ENCODE measurements at regions of chr12 and their contacts with region 1.

Region 1: DNA sequence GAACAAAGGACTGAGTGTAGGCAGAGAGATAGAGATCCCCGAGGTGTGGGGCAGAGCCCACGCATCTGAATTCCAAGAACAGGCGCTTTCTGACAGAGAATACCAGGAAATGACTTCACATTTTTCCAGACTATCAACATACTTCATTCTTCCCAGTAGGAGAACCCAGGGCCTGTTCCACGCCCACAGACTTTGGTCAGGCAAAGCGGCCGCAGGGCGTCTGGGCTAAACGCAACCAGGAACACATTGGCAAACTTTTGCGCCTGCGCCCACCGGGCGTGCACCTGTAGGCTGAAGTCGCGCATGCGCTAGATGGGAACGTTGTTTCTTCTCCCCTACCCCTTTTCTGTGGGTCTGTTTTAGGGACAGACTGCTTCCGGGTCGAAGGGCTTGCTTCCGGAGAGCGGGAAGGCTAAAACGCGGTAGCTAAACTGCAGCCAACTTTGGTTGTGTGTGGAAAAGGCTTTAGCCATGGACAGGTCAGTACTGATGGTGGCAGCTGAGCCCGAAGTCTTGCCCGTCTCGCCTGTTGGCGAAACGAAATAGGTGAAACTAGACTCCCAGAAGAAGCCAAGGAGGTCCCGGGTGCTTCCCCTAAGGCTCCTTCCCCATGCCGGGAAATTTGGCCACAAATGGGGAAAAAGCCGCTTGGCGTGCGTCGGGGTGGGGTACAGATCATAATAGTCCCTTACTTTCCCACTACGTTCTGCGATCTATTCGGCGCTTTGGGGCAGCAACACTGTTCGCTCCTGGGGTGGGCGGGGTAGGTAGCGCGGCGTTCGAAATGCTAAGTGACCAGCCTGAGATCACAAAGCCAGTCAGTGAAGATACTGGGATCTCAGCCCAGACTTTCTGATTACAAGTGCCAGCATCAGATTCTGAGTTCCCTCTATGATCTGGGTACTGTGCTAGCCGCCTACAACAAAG is at the start of gene NUP107:
- DNase-seq: peak; percentile 95
- ATAC-seq: peak; percentile 97
- H3K4me3 ChIP-seq: peak within 1 kb of the TSS; percentile 91
- H3K27ac ChIP-seq: peak within 1 kb of the TSS; percentile 83
- H3K4me1 ChIP-seq: peaks cover 9% of the 10 kb centered on the region
- H3K27me3 ChIP-seq: no peaks in the 10 kb centered on the region
- CTCF ChIP-seq: no peak
- EP300 ChIP-seq: no peak
- POLR2A ChIP-seq: peak; percentile 94
- RAD21 ChIP-seq: 0 out of 2 replicates have a peak, but pooled peaks have one; percentile 10
- polyA plus RNA-seq, gene NUP107: 79.4 to 85.2 TPM

Region 2: GRCh38 chr12:68331869-68332727 is 354.8 kb before region 1 on chr12 and contains the start of gene MDM1:
- CTCF ChIA-PET with region 1: interaction called, 4 read pairs
- POLR2A ChIA-PET with region 1: no interaction called
- RAD21 ChIA-PET with region 1: no interaction called
- SMC1A ChIA-PET with region 1: interaction called, 3 read pairs
- in situ Hi-C with region 1: no loop called
- intact Hi-C with region 1: loop called (anchors 2 kb)
- DNase-seq: peak; percentile 92
- ATAC-seq: peak; percentile 98
- H3K4me3 ChIP-seq: peak within 1 kb of the TSS; percentile 83
- H3K27ac ChIP-seq: peak within 1 kb of the TSS; percentile 57
- H3K4me1 ChIP-seq: no peaks in the 10 kb centered on the region
- H3K27me3 ChIP-seq: no peaks in the 10 kb centered on the region
- CTCF ChIP-seq: no peak
- EP300 ChIP-seq: no peak
- POLR2A ChIP-seq: peak; percentile 82
- RAD21 ChIP-seq: no peak
- polyA plus RNA-seq, gene MDM1: 10.1 to 10.6 TPM

Region 3: DNA sequence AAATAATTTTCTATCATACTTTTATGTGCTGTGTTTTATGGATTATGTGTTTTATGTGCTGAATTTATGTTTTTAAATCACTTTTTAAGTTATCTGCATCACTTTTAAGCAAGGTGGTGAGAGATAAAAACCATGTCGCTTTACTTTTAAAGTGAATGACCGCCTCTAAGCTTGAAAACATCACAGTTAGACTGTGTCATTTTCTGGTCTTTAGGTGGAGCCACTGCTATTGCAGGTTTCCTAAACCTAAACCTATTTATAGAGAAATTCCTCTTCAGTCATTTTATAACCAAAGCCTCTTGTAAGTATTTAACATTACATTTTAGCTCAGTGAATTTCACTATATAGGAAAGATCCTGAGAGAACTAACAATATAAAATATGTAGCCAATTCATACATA is 100.1 kb after region 1 on chr12:
- CTCF ChIA-PET with region 1: no interaction called
- POLR2A ChIA-PET with region 1: no interaction called
- RAD21 ChIA-PET with region 1: no interaction called
- SMC1A ChIA-PET with region 1: no interaction called
- in situ Hi-C with region 1: no loop called
- intact Hi-C with region 1: no loop called
- DNase-seq: no peak
- ATAC-seq: peak; percentile 31; the same call in 2 of the 3 replicates
- H3K4me3 ChIP-seq: no peak overlapping the region
- H3K27ac ChIP-seq: peak overlapping the region; percentile 49; the same call in 1 of the 2 replicates
- H3K4me1 ChIP-seq: no peaks in the 10 kb centered on the region; the same call in 1 of the 2 replicates
- H3K27me3 ChIP-seq: no peaks in the 10 kb centered on the region
- CTCF ChIP-seq: no peak; a peak in 1 of 6 replicates
- EP300 ChIP-seq: no peak
- POLR2A ChIP-seq: no peak
- RAD21 ChIP-seq: no peak

Measured in GM12878 (cell line).